ENCODE measurements at regions of chr9 and their contacts with region 1.

Region 1: GRCh38 chr9:126558051-126558665 is 55.6 kb upstream of the LMX1B start:
- DNase-seq: peak; percentile 65

Region 2: DNA sequence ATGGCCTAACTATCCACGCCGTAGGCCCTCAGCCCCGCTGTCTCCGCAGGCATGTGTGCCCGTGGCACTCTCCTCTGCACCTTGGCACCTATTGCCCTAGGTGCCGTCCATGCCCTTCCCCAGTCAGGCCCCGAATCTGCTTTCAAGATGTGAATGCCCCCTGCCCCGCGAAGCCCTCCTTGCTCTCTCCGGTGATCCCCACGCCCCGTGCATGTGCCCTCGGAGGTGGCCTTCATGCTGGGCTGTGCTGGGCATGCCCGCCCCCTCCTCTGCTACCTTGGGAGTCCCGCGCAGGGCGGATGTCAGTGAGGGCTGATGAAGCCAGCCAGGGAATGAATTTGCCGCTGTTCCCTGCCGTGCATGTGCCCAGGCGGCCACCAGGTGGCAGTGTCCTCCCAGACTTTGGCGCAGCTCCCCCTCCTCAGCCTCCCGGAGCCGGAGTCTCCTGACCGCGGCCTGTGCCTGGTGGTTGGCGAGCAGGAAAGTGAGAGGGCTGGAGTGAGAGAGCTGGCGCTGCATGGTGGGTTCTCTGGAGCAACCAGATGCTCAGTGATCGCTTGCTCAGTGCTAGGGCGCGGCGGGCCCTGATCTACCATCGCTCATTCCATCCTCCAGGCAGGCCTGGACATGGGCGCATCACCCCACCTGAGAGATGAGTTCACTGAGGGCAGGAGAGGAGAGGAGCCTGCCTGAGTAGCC is 57.3 kb before region 1 on chr9:
- CTCF ChIA-PET with region 1: interaction called, 31 read pairs
- POLR2A ChIA-PET with region 1: interaction called, 3 read pairs
- DNase-seq: peak; percentile 79

Region 3: DNA sequence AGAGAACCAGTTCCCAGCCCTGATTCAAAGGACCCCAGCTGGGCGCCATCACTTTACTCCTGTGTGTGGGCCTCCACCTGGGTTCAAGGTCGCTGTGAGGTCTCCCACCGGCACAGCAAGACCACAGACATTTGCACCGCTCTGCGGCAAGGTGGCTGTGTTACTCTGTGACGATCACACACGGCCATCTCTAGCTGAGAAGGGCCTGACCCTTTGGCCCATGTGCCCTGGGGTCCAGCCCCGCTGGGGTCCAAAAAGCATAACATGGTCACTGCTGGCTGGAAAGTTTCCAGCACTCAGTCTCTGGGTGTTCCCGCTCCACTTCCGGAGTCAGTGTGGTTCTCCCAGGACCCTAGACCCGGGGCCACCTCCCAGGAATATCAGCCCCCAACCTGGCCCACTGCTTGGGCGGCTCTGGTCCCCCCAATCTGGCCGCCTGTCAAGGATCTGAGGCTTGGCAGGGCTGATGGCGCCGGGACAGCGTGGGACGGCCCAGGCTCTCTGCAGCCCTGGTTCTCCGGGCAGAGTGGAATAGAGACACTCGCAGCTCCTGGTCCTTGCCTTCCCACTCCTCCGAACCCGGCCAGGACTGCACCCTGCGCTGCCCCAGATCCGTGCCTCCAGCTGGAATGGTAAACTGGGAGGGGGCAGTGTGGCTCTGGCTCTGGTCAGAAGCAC is 51.7 kb after region 1 on chr9:
- CTCF ChIA-PET with region 1: no interaction called
- POLR2A ChIA-PET with region 1: no interaction called
- DNase-seq: no peak

Region 4: GRCh38 chr9:126626127-126626925 is 68.2 kb after region 1 on chr9:
- CTCF ChIA-PET with region 1: no interaction called
- POLR2A ChIA-PET with region 1: no interaction called
- DNase-seq: no peak

Measured in HEK293T (cell line).